ENCODE measurements at regions of chr5 and their contacts with region 1.

Region 1: GRCh38 chr5:41748631-41749030 is 121.6 kb downstream of the OXCT1 start:
- DNase-seq: no peak
- H3K4me3 Mint-ChIP-seq: no peak overlapping the region
- H3K27ac Mint-ChIP-seq: peak overlapping the region; percentile 50
- H3K4me1 Mint-ChIP-seq: peaks cover 18% of the 10 kb centered on the region
- H3K27me3 Mint-ChIP-seq: no peaks in the 10 kb centered on the region

Region 2: GRCh38 chr5:41735213-41735612 is 13.4 kb before region 1 on chr5:
- intact Hi-C with region 1: loop called (anchors 2 kb)
- DNase-seq: no peak
- H3K4me3 Mint-ChIP-seq: no peak overlapping the region
- H3K27ac Mint-ChIP-seq: no peak overlapping the region
- H3K4me1 Mint-ChIP-seq: peaks cover 6% of the 10 kb centered on the region
- H3K27me3 Mint-ChIP-seq: no peaks in the 10 kb centered on the region

Region 3: DNA sequence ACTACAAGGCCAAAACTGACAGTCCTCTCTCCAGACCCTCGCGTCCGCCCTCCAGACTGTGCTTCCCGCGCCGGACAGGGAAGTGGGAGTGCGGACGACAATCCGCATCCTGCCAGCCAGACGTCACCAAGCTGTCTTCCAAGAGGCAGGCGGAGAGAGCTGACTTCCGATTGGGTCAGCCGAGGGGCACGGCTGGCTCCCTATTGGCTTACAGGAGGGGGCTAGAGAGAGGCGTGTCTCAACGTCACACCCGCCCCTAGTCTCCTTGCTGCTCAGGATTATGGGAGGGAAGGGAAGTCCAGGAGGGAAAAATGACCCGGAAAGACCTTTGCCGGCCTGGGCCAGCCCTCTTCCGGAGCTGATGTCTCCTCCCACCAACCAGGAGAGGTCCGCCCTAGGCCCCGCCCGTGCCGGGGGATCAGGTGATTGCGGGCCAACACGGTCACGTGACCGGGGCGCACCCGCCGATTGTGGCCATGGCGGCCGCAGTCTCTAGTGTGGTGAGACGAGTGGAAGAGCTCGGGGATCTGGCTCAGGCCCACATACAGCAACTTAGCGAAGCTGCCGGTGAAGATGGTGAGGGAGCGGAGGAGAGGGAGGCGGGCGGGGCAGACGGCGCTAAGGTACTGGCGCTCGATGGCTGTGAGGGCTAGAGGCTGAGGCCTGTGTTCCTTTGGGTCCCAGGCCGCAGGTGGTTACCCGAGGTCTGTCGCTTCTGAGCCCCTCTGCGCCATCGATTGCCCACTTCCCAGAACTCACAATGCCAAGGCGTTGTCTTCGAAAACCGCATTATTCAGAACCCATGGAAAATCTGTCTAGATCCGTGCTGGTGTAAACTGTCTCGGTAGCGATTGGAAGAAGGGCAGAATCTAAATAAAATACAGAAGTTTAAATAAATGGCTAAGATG is 155.5 kb after region 1 on chr5 and contains the start of gene RIMOC1:
- intact Hi-C with region 1: loop called (anchors 2 kb)
- DNase-seq: peak; percentile 98
- H3K4me3 Mint-ChIP-seq: peak within 1 kb of the TSS; percentile 99
- H3K27ac Mint-ChIP-seq: peak within 1 kb of the TSS; percentile 100
- H3K4me1 Mint-ChIP-seq: peaks cover 54% of the 10 kb centered on the region
- H3K27me3 Mint-ChIP-seq: peaks cover 10% of the 10 kb centered on the region
- total RNA-seq, gene RIMOC1: 28.0 and 29.0 TPM in 2 replicates

Region 4: GRCh38 chr5:41924872-41925554 is 176.4 kb after region 1 on chr5 and contains the start of gene FBXO4:
- intact Hi-C with region 1: loop called (anchors 1 kb)
- DNase-seq: peak; percentile 87
- H3K4me3 Mint-ChIP-seq: peak within 1 kb of the TSS; percentile 91
- H3K27ac Mint-ChIP-seq: peak within 1 kb of the TSS; percentile 98
- H3K4me1 Mint-ChIP-seq: peaks cover 13% of the 10 kb centered on the region
- H3K27me3 Mint-ChIP-seq: no peaks in the 10 kb centered on the region
- total RNA-seq, gene FBXO4: 14.1 and 17.8 TPM in 2 replicates